ENCODE measurements at regions of chr5 and their contacts with region 1.

Region 1: GRCh38 chr5:97377582-97377981 is 194.5 kb upstream of the RIOK2 start:
- DNase-seq: no peak
- CTCF ChIP-seq: no peak

Region 2: GRCh38 chr5:97363577-97363976 is 14.0 kb before region 1 on chr5:
- CTCF ChIA-PET with region 1: interaction called, 11 read pairs
- POLR2A ChIA-PET with region 1: no interaction called
- DNase-seq: no peak
- CTCF ChIP-seq: no peak